CD4-positive, alpha-beta memory T cell (primary cell): ENCODE measurements at regions of chr15 and their contacts with region 1.

Region 1: DNA sequence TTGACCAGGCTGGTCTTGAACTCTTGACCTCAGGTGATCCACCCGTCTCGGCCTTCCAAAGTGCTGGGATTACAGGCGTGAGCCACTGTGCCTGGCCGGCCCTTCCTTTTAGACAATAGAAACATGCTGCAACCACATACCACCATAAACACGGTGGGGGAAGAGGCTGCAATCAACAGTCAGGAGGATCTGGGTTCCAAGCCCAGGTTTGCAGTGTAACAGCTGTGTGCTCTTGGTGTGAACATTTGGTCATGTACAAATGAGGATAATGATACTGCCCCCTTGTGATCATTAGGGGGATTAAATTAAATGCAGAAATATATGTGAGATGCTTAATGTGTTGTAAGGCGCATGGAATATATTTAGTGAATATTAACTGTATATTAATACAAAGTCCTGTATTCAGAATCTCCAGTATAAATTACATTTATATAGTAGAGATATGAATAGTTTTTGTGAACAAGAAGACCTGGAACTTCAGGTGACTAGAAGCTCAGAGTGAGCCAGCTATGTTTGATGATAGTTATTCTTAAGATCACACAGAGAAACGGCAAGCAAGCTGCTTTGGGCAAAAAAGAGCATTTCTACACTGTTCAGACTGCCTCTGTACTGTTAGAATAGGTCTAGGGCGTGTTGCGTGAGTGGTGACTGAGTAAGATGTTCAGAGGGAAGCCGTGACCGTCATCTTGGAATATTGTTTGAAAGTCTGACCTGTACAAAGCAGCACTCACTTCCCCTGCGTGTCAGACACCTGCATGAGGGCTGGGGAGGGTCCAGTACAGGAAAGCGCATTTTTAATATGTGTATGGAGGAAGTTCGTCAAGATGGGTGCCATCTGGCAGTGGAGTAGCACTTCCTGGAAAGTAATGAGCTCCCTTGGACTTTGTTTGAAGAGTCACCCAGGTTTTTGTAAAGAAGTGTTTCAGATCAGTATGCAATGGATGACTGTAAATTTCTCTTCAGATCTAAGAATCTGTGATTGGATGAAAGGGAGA is 125.8 kb downstream of the PGPEP1L start:
- DNase-seq: peak in 4 of 5 donors; percentile 33 to 43 (median 36)
- H3K4me3 ChIP-seq: no peak overlapping the region
- H3K4me3 Mint-ChIP-seq: no peak overlapping the region
- H3K27ac ChIP-seq: no peak overlapping the region
- H3K27ac Mint-ChIP-seq: peak overlapping the region in 3 of 7 donors; percentile 5 to 55 (median 47)
- H3K4me1 ChIP-seq: no peaks in the 10 kb centered on the region
- H3K4me1 Mint-ChIP-seq: peaks cover 0 to 4% (median 1%) of the 10 kb centered on the region in 4 donors
- H3K27me3 ChIP-seq: no peaks in the 10 kb centered on the region
- H3K27me3 Mint-ChIP-seq: peaks cover 0 to 6% of the 10 kb centered on the region in 2 donors

Region 2: GRCh38 chr15:98518823-98519561 is 362.8 kb before region 1 on chr15:
- CTCF ChIA-PET with region 1: interaction called, 27 read pairs
- POLR2A ChIA-PET with region 1: no interaction called
- intact Hi-C with region 1: loop called (anchors 1 kb)
- DNase-seq: peak in 4 of 5 donors; percentile 38 to 50 (median 42)
- H3K4me3 ChIP-seq: no peak overlapping the region
- H3K4me3 Mint-ChIP-seq: no peak overlapping the region
- H3K27ac ChIP-seq: no peak overlapping the region
- H3K27ac Mint-ChIP-seq: peak overlapping the region in 1 of 7 donors; percentile 23
- H3K4me1 ChIP-seq: no peaks in the 10 kb centered on the region
- H3K4me1 Mint-ChIP-seq: peaks cover 0 to 4% (median 0%) of the 10 kb centered on the region in 4 donors
- H3K27me3 ChIP-seq: no peaks in the 10 kb centered on the region
- H3K27me3 Mint-ChIP-seq: peaks cover 0 to 4% of the 10 kb centered on the region in 2 donors

Region 3: GRCh38 chr15:98865397-98866339 is 16.2 kb before region 1 on chr15:
- CTCF ChIA-PET with region 1: interaction called, 11 read pairs
- POLR2A ChIA-PET with region 1: interaction called, 3 read pairs
- intact Hi-C with region 1: no loop called
- DNase-seq: peak; percentile 59 to 84 (median 72)
- H3K4me3 ChIP-seq: peak overlapping the region; percentile 46 to 63
- H3K4me3 Mint-ChIP-seq: peak overlapping the region; percentile 90 to 96 (median 94)
- H3K27ac ChIP-seq: peak overlapping the region; percentile 61
- H3K27ac Mint-ChIP-seq: peak overlapping the region; percentile 84 to 97 (median 93)
- H3K4me1 ChIP-seq: peaks cover 6% of the 10 kb centered on the region
- H3K4me1 Mint-ChIP-seq: peaks cover 13 to 25% (median 19%) of the 10 kb centered on the region in 4 donors
- H3K27me3 ChIP-seq: no peaks in the 10 kb centered on the region
- H3K27me3 Mint-ChIP-seq: peaks cover 0 to 1% of the 10 kb centered on the region in 2 donors

Region 4: DNA sequence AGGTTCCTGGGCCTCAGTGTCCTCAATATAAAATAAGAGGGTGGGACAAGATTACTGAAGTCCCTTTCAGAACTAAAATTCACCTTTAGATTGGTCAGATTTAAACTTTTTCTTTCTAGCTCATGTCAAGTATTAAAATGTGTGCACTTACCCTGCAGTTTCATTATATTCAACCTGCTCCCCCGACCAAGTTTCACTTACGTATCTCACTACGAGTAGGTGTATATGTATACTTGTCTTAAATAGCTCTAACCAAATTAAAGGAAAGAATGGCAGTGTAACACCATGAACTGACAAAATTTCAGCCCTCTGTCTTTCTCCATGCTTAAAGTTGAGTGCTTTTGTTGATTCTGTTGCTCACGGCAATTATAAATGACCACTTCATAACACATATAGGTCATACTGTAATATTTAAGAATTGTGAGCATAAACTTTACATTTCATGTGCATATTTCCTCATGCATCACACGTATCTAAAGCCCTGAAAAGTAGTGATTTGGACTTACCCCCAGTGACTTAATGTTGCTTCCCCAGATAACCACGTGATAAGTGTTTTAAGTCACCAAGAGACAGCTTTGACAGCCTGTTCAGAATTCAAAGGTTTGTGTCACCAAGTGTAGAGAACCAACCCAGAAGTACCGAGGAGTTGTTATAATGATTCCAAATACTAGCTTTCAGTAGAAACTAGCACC is 55.7 kb after region 1 on chr15:
- CTCF ChIA-PET with region 1: no interaction called
- POLR2A ChIA-PET with region 1: no interaction called
- intact Hi-C with region 1: no loop called
- DNase-seq: no peak
- H3K4me3 ChIP-seq: no peak overlapping the region
- H3K4me3 Mint-ChIP-seq: no peak overlapping the region
- H3K27ac ChIP-seq: no peak overlapping the region
- H3K27ac Mint-ChIP-seq: no peak overlapping the region
- H3K4me1 ChIP-seq: no peaks in the 10 kb centered on the region
- H3K4me1 Mint-ChIP-seq: peaks cover 0 to 1% (median 0%) of the 10 kb centered on the region in 4 donors
- H3K27me3 ChIP-seq: no peaks in the 10 kb centered on the region
- H3K27me3 Mint-ChIP-seq: no peaks in the 10 kb centered on the region